ENCODE measurements at regions of chr1 and their contacts with region 1.

Region 1: GRCh38 chr1:22039594-22040285 is 12.8 kb upstream of the CDC42 start:
- DNase-seq: peak; percentile 62 to 98 (median 97)
- ATAC-seq: peak; percentile 98
- H3K4me3 ChIP-seq: peak overlapping the region; percentile 25
- H3K4me3 Mint-ChIP-seq: peak overlapping the region; percentile 66 to 90 (median 81)
- H3K27ac ChIP-seq: peak overlapping the region; percentile 95
- H3K27ac Mint-ChIP-seq: peak overlapping the region; percentile 95 to 100 (median 99)
- H3K4me1 ChIP-seq: peaks cover 31 to 65% of the 10 kb centered on the region in 2 donors
- H3K4me1 Mint-ChIP-seq: peaks cover 35 to 77% (median 53%) of the 10 kb centered on the region in 7 donors
- H3K27me3 ChIP-seq: no peaks in the 10 kb centered on the region
- H3K27me3 Mint-ChIP-seq: no peaks in the 10 kb centered on the region

Region 2: DNA sequence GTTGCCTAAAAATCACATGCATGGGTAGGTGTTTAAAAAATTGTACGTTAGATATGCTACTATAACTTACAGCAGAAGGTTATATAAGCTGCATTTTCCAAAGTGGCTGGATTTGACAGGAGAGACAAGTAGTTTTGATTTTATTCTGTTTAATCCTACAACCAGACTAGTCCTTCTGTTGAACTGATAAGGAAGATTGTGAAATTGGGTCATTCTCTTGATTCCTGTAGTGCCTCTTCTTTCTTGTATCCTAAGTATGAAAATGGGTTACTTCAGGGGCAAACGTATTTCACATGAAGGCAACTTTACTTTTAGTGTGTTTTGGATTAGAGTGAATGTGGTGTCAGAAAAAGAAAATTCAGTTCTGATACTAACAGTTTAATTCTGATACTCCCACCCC is 31.8 kb after region 1 on chr1:
- CTCF ChIA-PET with region 1: interaction called, 3 read pairs
- POLR2A ChIA-PET with region 1: interaction called, 11 read pairs
- intact Hi-C with region 1: no loop called
- DNase-seq: no peak
- ATAC-seq: no peak
- H3K4me3 ChIP-seq: no peak overlapping the region
- H3K4me3 Mint-ChIP-seq: peak overlapping the region in 9 of 10 donors; percentile 8 to 76 (median 63)
- H3K27ac ChIP-seq: no peak overlapping the region
- H3K27ac Mint-ChIP-seq: peak overlapping the region in 7 of 9 donors; percentile 46 to 89 (median 66)
- H3K4me1 ChIP-seq: peaks cover 63 to 71% of the 10 kb centered on the region in 2 donors
- H3K4me1 Mint-ChIP-seq: peaks cover 65 to 89% (median 78%) of the 10 kb centered on the region in 7 donors
- H3K27me3 ChIP-seq: no peaks in the 10 kb centered on the region
- H3K27me3 Mint-ChIP-seq: no peaks in the 10 kb centered on the region

Measured in naive thymus-derived CD4-positive, alpha-beta T cell (primary cell).